Activated CD8-positive, alpha-beta T cell treated with anti-CD3 and anti-CD28 coated beads for 36 hours (primary cell): ENCODE measurements at regions of chr9 and their contacts with region 1.

Region 1: GRCh38 chr9:92115071-92115858 is at the start of gene SPTLC1:
- DNase-seq: peak; percentile 96
- ATAC-seq: peak; percentile 100
- H3K4me3 Mint-ChIP-seq: peak within 1 kb of the TSS; percentile 90
- H3K27ac Mint-ChIP-seq: peak within 1 kb of the TSS; percentile 94
- H3K4me1 Mint-ChIP-seq: peaks cover 23% of the 10 kb centered on the region
- H3K27me3 Mint-ChIP-seq: no peaks in the 10 kb centered on the region
- CTCF ChIP-seq: no peak
- total RNA-seq, gene SPTLC1: 39.6 to 39.8 TPM

Region 2: DNA sequence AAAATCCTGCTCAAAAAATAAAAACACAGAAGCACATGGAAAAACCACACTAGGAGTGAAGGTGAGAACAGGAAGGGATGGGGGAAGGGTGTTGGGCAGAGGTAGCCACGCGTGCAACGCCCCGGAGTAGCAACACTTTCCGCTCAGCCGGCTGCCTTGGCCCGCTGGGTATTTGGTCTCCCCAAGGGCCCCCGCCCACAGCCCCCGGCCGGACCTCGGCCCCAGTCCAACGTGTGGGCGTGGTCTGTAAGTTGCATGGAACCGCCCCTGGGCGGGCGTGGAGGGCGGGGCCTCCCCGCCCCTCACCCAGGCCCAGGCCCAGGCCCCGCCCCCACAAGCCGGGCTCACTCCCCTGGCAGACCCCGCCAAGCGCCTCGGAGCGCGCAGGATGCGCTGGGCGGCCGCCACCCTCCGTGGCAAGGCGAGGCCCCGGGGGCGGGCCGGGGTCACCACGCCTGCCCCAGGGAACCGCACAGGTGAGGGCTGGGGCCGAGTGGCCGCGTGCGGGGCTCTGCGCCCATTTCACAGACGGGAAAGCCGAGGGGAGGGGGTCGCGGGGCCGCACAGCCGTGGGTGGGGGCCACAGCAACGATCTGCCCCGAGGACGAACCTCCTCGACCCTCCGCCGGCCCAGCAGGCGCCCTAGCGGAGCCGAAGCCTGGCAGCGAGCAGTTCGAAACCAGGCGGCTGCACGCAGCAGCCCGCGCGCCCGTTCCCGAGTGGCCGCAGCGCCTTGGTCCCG is 943.3 kb after region 1 on chr9 and contains the start of gene SUSD3:
- CTCF ChIA-PET with region 1: no interaction called
- POLR2A ChIA-PET with region 1: no interaction called
- intact Hi-C with region 1: loop called (anchors 10 kb)
- DNase-seq: peak; percentile 76
- ATAC-seq: peak; percentile 63
- H3K4me3 Mint-ChIP-seq: peak within 1 kb of the TSS; percentile 86
- H3K27ac Mint-ChIP-seq: peak within 1 kb of the TSS; percentile 97
- H3K4me1 Mint-ChIP-seq: peaks cover 51% of the 10 kb centered on the region
- H3K27me3 Mint-ChIP-seq: no peaks in the 10 kb centered on the region
- CTCF ChIP-seq: no peak
- total RNA-seq, gene SUSD3: 34.6 to 36.7 TPM